HCT116 (cell line): ENCODE measurements at regions of chr14 and their contacts with region 1.

Region 1: GRCh38 chr14:23269193-23269592 is 16.7 kb downstream of the HOMEZ start:
- DNase-seq: no peak
- ATAC-seq: no peak
- H3K4me3 ChIP-seq: no peak overlapping the region
- H3K27ac ChIP-seq: no peak overlapping the region
- H3K4me1 ChIP-seq: no peaks in the 10 kb centered on the region
- H3K27me3 ChIP-seq: no peaks in the 10 kb centered on the region; the same call in 1 of the 2 replicates
- CTCF ChIP-seq: no peak
- POLR2A ChIP-seq: no peak
- RAD21 ChIP-seq: no peak

Region 2: DNA sequence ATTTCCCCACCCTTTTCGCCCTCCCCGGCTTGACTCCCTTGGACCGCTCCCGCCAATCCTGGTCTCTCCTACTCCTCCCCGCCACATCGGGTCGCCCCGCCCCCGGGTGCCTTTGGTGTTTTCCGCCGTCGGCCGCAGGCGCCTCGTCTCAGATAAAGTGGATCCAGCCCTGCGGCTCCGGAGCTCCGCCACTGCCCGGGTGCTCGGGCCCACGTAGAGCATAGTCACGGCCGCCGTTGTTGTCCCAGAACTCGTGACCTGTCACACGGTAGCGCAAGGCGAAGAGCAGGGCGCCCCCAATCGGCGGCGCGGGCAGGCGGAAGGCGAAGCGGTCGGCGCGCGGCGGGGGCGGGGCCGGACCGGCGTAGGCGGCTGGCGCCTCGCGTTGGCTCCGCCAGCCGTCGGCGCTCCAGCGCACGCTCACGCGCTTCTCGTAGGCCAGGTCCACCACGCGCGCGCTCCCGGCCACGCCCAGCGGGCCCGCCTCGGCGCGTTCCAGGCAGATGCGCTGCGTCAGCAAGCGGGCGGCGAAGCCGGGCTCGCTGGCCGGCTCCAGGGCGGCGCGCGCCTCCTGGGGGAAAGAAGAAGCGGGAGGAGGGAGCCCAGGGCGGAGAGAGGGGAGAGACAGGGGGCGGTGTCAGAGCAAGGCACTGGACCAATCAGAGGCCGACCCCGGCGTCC is 32.2 kb after region 1 on chr14:
- CTCF ChIA-PET with region 1: interaction called, 6 read pairs
- POLR2A ChIA-PET with region 1: no interaction called
- RAD21 ChIA-PET with region 1: no interaction called
- intact Hi-C with region 1: loop called (anchors 1 kb)
- DNase-seq: peak; percentile 95
- ATAC-seq: peak; percentile 84
- H3K4me3 ChIP-seq: peak overlapping the region; percentile 54 to 64
- H3K27ac ChIP-seq: peak overlapping the region; percentile 96
- H3K4me1 ChIP-seq: peaks cover 18 to 41% of the 10 kb centered on the region in 2 experiments
- H3K27me3 ChIP-seq: no peaks in the 10 kb centered on the region
- CTCF ChIP-seq: peak in 2 of 3 experiments; percentile 69 to 70; a peak in 4 of 6 replicates
- POLR2A ChIP-seq: peak; percentile 33
- RAD21 ChIP-seq: no peak

Region 3: GRCh38 chr14:23457587-23458445 is 188.6 kb after region 1 on chr14:
- CTCF ChIA-PET with region 1: interaction called, 9 read pairs
- POLR2A ChIA-PET with region 1: no interaction called
- RAD21 ChIA-PET with region 1: no interaction called
- intact Hi-C with region 1: loop called (anchors 1 kb)
- DNase-seq: no peak
- ATAC-seq: peak; percentile 73
- H3K4me3 ChIP-seq: peak overlapping the region in 1 of 2 experiments; percentile 22; a peak in 1 of 4 replicates
- H3K27ac ChIP-seq: no peak overlapping the region
- H3K4me1 ChIP-seq: peaks cover 2 to 11% of the 10 kb centered on the region in 2 experiments; a peak in 3 of 4 replicates
- H3K27me3 ChIP-seq: no peaks in the 10 kb centered on the region
- CTCF ChIP-seq: no peak
- POLR2A ChIP-seq: no peak
- RAD21 ChIP-seq: no peak

Region 4: GRCh38 chr14:23567192-23568020 is 298.2 kb after region 1 on chr14 and contains the start of gene AP1G2:
- CTCF ChIA-PET with region 1: no interaction called
- POLR2A ChIA-PET with region 1: no interaction called
- RAD21 ChIA-PET with region 1: no interaction called
- intact Hi-C with region 1: no loop called
- DNase-seq: peak; percentile 73
- ATAC-seq: peak; percentile 89
- H3K4me3 ChIP-seq: peak within 1 kb of the TSS; percentile 85 to 88
- H3K27ac ChIP-seq: peak within 1 kb of the TSS; percentile 86
- H3K4me1 ChIP-seq: peaks cover 26 to 34% of the 10 kb centered on the region in 2 experiments
- H3K27me3 ChIP-seq: no peaks in the 10 kb centered on the region
- CTCF ChIP-seq: no peak
- POLR2A ChIP-seq: peak; percentile 84
- RAD21 ChIP-seq: no peak
- total RNA-seq, gene AP1G2: 155 TPM